ENCODE measurements at regions of chr3 and their contacts with region 1.

Region 1: GRCh38 chr3:129893581-129894070 is at the start of gene TMCC1:
- DNase-seq: peak; percentile 79 to 98 (median 88)
- ATAC-seq: peak; percentile 93
- H3K4me3 ChIP-seq: peak within 1 kb of the TSS; percentile 92
- H3K4me3 Mint-ChIP-seq: peak within 1 kb of the TSS; percentile 94
- H3K27ac ChIP-seq: peak within 1 kb of the TSS; percentile 78 to 87
- H3K27ac Mint-ChIP-seq: peak within 1 kb of the TSS; percentile 90
- H3K4me1 ChIP-seq: peaks cover 28% of the 10 kb centered on the region
- H3K4me1 Mint-ChIP-seq: peaks cover 51% of the 10 kb centered on the region
- H3K27me3 ChIP-seq: no peaks in the 10 kb centered on the region
- H3K27me3 Mint-ChIP-seq: no peaks in the 10 kb centered on the region
- CTCF ChIP-seq: no peak
- total RNA-seq, gene TMCC1: 33.3 to 33.8 TPM

Region 2: GRCh38 chr3:129834580-129834979 is 59.0 kb before region 1 on chr3:
- CTCF ChIA-PET with region 1: no interaction called
- POLR2A ChIA-PET with region 1: no interaction called
- intact Hi-C with region 1: no loop called
- DNase-seq: no peak
- ATAC-seq: no peak
- H3K4me3 ChIP-seq: no peak overlapping the region
- H3K4me3 Mint-ChIP-seq: no peak overlapping the region
- H3K27ac ChIP-seq: no peak overlapping the region
- H3K27ac Mint-ChIP-seq: no peak overlapping the region
- H3K4me1 ChIP-seq: no peaks in the 10 kb centered on the region
- H3K4me1 Mint-ChIP-seq: peaks cover 16% of the 10 kb centered on the region
- H3K27me3 ChIP-seq: no peaks in the 10 kb centered on the region
- H3K27me3 Mint-ChIP-seq: no peaks in the 10 kb centered on the region
- CTCF ChIP-seq: no peak

Region 3: DNA sequence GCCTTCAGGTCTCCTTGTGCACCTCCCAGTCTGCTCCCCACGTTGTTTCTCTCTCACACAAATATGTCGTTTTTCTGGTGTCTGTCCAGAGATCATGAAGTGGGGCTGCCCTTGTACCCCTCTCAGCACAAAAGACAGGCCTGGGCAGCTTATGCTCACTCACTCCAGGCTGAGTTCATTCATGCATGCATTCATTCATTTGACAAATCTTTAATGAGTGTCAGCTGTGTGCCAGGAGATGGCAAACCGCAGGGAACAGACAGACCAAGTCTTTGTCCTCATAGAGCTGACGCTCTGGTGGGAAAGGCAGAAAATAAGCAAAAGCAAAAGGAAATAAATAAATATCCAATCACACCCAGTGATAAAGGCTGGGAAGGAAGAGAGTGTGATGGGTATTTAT is 73.2 kb after region 1 on chr3:
- CTCF ChIA-PET with region 1: no interaction called
- POLR2A ChIA-PET with region 1: no interaction called
- intact Hi-C with region 1: no loop called
- DNase-seq: no peak
- ATAC-seq: no peak
- H3K4me3 ChIP-seq: no peak overlapping the region
- H3K4me3 Mint-ChIP-seq: no peak overlapping the region
- H3K27ac ChIP-seq: no peak overlapping the region
- H3K27ac Mint-ChIP-seq: no peak overlapping the region
- H3K4me1 ChIP-seq: no peaks in the 10 kb centered on the region
- H3K4me1 Mint-ChIP-seq: no peaks in the 10 kb centered on the region
- H3K27me3 ChIP-seq: no peaks in the 10 kb centered on the region
- H3K27me3 Mint-ChIP-seq: peaks cover 15% of the 10 kb centered on the region
- CTCF ChIP-seq: no peak

Region 4: DNA sequence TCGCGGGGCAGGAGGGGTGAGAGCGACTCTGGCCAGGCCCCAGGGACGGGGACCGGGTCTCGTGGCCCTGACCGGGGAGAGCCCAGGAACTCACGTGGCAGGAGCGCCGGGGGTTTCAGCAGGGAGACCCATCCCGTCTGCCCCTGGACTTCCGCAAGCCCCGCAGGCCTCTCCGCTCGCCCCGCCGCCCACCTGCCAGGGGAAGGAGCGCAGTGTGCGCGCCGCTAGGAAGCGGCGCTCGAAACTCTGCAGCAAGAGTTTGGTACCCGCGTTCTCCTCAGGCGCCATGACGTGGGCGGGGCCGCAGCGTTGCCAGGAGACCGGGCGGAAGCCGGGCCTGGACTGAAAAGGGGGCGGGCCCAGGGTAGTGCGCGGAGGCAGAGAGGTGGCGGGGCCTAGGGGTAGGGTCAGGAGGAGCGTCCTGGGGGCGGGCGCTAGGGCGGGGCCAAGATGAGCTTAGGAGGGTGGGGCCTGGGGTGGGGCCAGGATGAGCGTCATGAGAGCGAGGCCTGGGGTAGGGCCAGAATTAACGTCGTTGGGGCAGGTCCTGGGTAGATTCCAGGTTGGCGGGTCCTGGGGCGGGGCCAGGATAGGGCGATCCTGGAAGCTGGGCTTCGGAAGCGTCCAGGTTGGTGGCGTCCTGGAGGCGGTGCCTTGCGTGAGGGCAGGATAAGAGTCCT is 217.7 kb after region 1 on chr3:
- CTCF ChIA-PET with region 1: no interaction called
- POLR2A ChIA-PET with region 1: interaction called, 4 read pairs
- intact Hi-C with region 1: loop called in 1 of 2 experiments (anchors 5 kb)
- DNase-seq: peak; percentile 98 to 100 (median 99)
- ATAC-seq: peak; percentile 100
- H3K4me3 ChIP-seq: peak overlapping the region; percentile 65
- H3K4me3 Mint-ChIP-seq: peak overlapping the region; percentile 99
- H3K27ac ChIP-seq: peak overlapping the region; percentile 67 to 95
- H3K27ac Mint-ChIP-seq: peak overlapping the region; percentile 99
- H3K4me1 ChIP-seq: peaks cover 9% of the 10 kb centered on the region
- H3K4me1 Mint-ChIP-seq: peaks cover 14% of the 10 kb centered on the region
- H3K27me3 ChIP-seq: no peaks in the 10 kb centered on the region
- H3K27me3 Mint-ChIP-seq: no peaks in the 10 kb centered on the region
- CTCF ChIP-seq: no peak